Activated CD4-positive, alpha-beta T cell treated with anti-CD3 and anti-CD28 coated beads for 36 hours (primary cell): ENCODE measurements at regions of chr3 and their contacts with region 1.

Region 1: GRCh38 chr3:47380601-47381316 is at the start of gene PTPN23:
- DNase-seq: peak; percentile 99
- ATAC-seq: peak; percentile 81
- H3K4me3 Mint-ChIP-seq: peak within 1 kb of the TSS; percentile 86
- H3K27ac Mint-ChIP-seq: peak within 1 kb of the TSS; percentile 99
- H3K4me1 Mint-ChIP-seq: peaks cover 39% of the 10 kb centered on the region
- H3K27me3 Mint-ChIP-seq: no peaks in the 10 kb centered on the region
- total RNA-seq, gene PTPN23: 25.9 to 29.4 TPM

Region 2: DNA sequence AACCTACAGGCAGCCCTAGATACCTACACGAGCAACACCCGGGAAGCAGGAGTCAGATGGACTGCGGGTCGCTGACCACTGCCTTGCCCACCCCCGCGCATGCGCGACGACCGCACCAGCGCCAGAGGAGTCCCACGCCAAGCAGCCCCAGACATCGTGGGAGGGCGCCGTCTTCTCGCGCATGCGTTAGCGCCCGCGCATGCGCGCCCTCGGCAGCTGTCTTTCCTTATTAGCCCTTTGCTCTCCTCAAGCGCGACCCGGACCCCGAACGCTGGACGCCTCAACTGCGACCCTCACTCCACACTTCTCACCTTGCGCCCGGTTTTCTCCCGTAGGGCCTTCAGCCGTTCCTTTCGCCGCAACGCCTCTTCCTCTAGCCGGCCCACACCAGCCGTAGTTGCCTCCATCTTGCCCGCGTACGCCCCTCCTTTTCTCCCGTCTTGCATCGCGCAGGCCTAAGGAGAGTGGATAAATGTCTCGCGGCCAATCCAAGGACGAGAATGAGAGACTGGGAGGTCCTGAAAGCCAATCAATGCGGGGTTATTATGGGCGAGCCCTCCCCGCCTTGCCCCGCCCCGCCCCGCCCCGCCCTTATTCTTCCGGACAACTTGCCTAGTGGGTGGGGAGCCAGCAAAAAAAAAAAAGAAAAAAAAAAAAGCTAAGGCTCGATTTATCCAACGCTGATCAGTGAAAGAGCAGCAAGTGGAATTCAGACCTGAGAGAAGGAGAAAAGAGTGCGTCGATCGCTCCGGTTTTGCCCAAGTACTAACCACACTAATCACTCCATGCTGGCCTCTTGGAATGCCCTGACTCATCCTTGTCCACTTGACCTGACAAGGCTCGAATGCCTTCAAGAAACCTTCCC is 404.2 kb before region 1 on chr3 and contains the start of gene CCDC12:
- CTCF ChIA-PET with region 1: no interaction called
- POLR2A ChIA-PET with region 1: interaction called, 3 read pairs
- intact Hi-C with region 1: loop called (anchors 1 to 5 kb)
- DNase-seq: peak; percentile 96
- ATAC-seq: peak; percentile 82
- H3K4me3 Mint-ChIP-seq: peak within 1 kb of the TSS; percentile 92
- H3K27ac Mint-ChIP-seq: peak within 1 kb of the TSS; percentile 99
- H3K4me1 Mint-ChIP-seq: peaks cover 66% of the 10 kb centered on the region
- H3K27me3 Mint-ChIP-seq: no peaks in the 10 kb centered on the region
- total RNA-seq, gene CCDC12: 45.4 to 47.8 TPM

Region 3: DNA sequence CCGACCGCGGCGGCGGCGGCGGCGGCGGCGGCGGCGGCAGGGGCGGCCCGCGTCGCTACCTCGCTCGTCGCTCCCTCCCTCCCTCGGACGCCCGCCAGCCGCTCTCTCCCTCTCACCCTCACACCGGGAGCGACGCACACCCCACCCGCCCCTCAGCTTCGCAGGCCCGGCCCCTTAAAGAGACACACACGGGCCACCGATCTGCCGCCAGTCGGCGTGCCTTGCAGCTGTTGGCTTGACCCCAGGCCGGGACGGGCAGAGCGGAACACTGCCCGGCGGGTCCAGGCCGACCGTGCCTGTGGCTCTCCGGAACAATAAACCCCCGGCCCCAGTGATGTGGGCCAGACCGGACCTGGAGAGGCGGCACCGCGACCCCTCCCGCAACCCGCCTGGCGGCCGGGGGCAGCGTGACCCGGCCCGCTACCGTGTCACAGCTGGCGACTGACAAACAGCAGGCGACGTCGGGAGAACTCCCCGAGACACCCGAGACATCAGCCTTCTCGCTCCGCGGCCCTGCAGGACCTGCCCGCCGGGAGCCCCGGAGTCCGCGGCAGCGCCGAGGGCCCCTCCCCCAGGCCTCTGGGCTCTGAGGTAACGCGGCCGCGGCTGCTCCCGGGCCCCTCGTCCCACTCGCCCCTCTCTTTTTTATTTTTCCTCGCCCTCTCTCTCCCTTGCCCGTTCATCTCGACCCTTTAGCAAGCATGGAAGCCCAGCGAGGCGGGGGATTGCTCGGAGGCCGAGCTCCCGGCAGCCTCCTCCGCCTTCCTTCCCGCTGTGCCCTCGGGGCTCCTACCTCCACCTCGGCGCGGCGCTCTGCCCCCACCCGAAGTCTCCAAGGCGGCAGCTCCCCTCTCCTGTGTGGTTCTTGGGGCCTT is 216.5 kb before region 1 on chr3 and contains the start of gene SETD2:
- CTCF ChIA-PET with region 1: interaction called, 3 read pairs
- POLR2A ChIA-PET with region 1: interaction called, 6 read pairs
- intact Hi-C with region 1: loop called (anchors 1 to 5 kb)
- DNase-seq: peak; percentile 94
- ATAC-seq: peak; percentile 86
- H3K4me3 Mint-ChIP-seq: peak within 1 kb of the TSS; percentile 97
- H3K27ac Mint-ChIP-seq: peak within 1 kb of the TSS; percentile 99
- H3K4me1 Mint-ChIP-seq: peaks cover 40% of the 10 kb centered on the region
- H3K27me3 Mint-ChIP-seq: no peaks in the 10 kb centered on the region
- total RNA-seq, gene SETD2: 31.8 to 35.8 TPM

Region 4: DNA sequence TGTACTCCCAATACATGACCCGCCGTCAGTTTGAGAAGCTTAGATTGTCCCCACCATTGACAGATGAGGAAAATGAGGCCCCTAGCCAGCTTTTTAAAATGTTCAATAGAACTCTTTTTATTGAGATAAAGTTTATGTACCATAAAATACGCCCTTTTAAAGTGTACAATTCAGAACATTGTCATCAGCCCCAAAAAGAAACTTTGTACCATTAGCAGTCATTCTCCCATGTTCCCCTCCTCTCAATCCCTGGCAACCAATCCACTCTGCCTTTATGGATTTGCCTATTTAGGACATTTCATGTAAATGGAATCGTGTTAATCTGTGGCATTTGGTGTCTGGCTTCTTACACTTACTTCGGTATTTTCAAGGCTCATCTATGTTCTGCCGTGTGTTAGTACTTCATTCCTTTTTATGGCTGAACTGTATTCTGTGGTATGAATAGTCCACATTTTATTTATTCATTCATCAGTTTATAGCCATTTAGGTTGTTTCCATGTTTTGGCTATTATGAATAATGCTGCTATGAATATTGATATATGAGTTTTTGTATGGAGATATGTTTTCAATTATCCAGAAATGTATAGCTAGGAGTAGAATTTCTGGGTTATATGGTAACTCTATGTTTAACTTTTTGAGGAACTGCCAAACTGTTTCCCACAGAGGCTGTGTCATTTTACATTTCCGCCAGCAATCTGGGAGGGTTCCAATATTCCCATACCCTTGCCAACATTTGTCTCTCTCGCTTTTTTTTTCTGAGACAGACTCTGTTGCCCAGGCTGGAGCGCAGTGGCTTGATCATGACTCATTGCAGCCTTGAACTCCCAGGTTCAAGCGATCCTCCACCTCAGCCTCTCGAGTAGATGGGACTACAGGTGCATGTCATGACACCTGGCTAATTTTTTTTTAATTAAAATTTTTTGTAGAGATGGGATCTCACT is 15.3 kb before region 1 on chr3:
- CTCF ChIA-PET with region 1: interaction called, 5 read pairs
- POLR2A ChIA-PET with region 1: no interaction called
- intact Hi-C with region 1: loop called in 1 of 2 experiments (anchors 1 kb)
- DNase-seq: no peak
- ATAC-seq: no peak
- H3K4me3 Mint-ChIP-seq: no peak overlapping the region
- H3K27ac Mint-ChIP-seq: no peak overlapping the region
- H3K4me1 Mint-ChIP-seq: peaks cover 10% of the 10 kb centered on the region
- H3K27me3 Mint-ChIP-seq: peaks cover 2% of the 10 kb centered on the region

Region 5: GRCh38 chr3:47475570-47476329 is 95.0 kb after region 1 on chr3 and contains the start of gene SCAP:
- CTCF ChIA-PET with region 1: interaction called, 6 read pairs
- POLR2A ChIA-PET with region 1: interaction called, 3 read pairs
- intact Hi-C with region 1: loop called in 1 of 2 experiments (anchors 1 kb)
- DNase-seq: peak; percentile 98
- ATAC-seq: peak; percentile 95
- H3K4me3 Mint-ChIP-seq: peak within 1 kb of the TSS; percentile 89
- H3K27ac Mint-ChIP-seq: peak within 1 kb of the TSS; percentile 84
- H3K4me1 Mint-ChIP-seq: peaks cover 33% of the 10 kb centered on the region
- H3K27me3 Mint-ChIP-seq: no peaks in the 10 kb centered on the region
- total RNA-seq, gene SCAP: 44.5 to 51.2 TPM

Region 6: DNA sequence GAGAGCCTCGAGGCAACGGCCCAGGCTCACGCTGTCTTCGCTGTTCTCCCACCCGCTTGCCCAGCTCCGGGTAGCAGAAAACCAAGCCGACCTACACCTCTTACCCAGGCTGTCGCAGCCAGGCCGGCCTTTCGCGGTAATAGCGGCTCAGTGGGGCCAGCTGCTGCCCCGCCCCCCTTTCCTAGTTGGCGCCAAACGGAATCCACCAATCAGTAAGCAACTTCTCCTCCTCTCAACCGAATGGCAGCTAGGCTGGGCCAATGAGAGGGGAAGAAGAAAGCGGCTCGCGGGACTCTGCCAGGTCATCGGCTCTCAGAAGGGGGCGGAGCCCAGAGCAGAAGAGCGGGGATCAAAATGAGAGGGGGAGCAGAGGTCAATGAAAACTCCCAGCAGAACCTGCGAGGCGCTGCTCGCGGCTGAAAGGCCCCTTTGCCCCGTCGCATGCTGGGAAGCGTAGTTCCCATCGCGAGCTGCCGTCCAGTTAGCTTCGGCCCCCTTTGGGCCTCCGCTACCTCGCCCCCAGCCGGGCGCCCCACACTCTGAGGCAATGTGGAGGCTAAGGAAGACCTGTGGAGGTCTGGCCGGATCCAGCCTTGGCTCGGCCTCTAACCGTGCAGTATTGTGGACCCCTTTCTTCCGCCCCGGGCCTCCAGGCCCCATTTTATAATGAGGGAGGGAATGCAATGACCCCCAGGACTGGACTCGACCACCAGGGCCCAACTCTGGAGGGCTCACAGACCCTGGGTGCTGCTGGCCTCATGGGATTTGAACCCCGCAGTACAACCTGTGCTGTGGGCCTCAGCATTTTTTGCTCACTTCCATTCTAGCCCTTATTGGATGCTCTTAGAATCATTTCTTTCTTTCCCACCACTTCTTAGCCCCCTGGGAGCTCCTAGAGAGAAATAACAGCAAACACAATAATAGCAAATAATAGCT is 807.8 kb after region 1 on chr3 and contains the start of gene CDC25A:
- CTCF ChIA-PET with region 1: no interaction called
- POLR2A ChIA-PET with region 1: no interaction called
- intact Hi-C with region 1: loop called in 1 of 2 experiments (anchors 1 kb)
- DNase-seq: peak; percentile 98
- ATAC-seq: peak; percentile 99
- H3K4me3 Mint-ChIP-seq: peak within 1 kb of the TSS; percentile 96
- H3K27ac Mint-ChIP-seq: peak within 1 kb of the TSS; percentile 79
- H3K4me1 Mint-ChIP-seq: peaks cover 15% of the 10 kb centered on the region
- H3K27me3 Mint-ChIP-seq: peaks cover 7% of the 10 kb centered on the region
- total RNA-seq, gene CDC25A: 32.5 to 33.9 TPM